Naive thymus-derived CD4-positive, alpha-beta T cell (primary cell): ENCODE measurements at regions of chr2 and their contacts with region 1.

Region 1: GRCh38 chr2:196639180-196640030 is at the start of gene CCDC150:
- DNase-seq: peak; percentile 88 to 95 (median 94)
- ATAC-seq: peak; percentile 100
- H3K4me3 ChIP-seq: peak within 1 kb of the TSS; percentile 86
- H3K4me3 Mint-ChIP-seq: peak within 1 kb of the TSS; percentile 82 to 92 (median 88)
- H3K27ac ChIP-seq: peak within 1 kb of the TSS; percentile 48
- H3K27ac Mint-ChIP-seq: peak within 1 kb of the TSS in 8 of 9 donors; percentile 30 to 78 (median 43)
- H3K4me1 ChIP-seq: peaks cover 7 to 8% of the 10 kb centered on the region in 2 donors
- H3K4me1 Mint-ChIP-seq: peaks cover 4 to 26% (median 19%) of the 10 kb centered on the region in 7 donors
- H3K27me3 ChIP-seq: no peaks in the 10 kb centered on the region
- H3K27me3 Mint-ChIP-seq: peaks cover 0 to 15% (median 0%) of the 10 kb centered on the region in 5 donors
- total RNA-seq, gene CCDC150: 0.13 to 11.2 (median 1.2) TPM

Region 2: GRCh38 chr2:196431957-196432356 is 207.4 kb before region 1 on chr2:
- CTCF ChIA-PET with region 1: no interaction called
- POLR2A ChIA-PET with region 1: no interaction called
- intact Hi-C with region 1: no loop called
- DNase-seq: no peak
- ATAC-seq: no peak
- H3K4me3 ChIP-seq: no peak overlapping the region
- H3K4me3 Mint-ChIP-seq: no peak overlapping the region
- H3K27ac ChIP-seq: no peak overlapping the region
- H3K27ac Mint-ChIP-seq: no peak overlapping the region
- H3K4me1 ChIP-seq: no peaks in the 10 kb centered on the region
- H3K4me1 Mint-ChIP-seq: peaks cover 0 to 12% (median 5%) of the 10 kb centered on the region in 7 donors
- H3K27me3 ChIP-seq: no peaks in the 10 kb centered on the region
- H3K27me3 Mint-ChIP-seq: peaks cover 5 to 31% (median 15%) of the 10 kb centered on the region in 5 donors

Region 3: DNA sequence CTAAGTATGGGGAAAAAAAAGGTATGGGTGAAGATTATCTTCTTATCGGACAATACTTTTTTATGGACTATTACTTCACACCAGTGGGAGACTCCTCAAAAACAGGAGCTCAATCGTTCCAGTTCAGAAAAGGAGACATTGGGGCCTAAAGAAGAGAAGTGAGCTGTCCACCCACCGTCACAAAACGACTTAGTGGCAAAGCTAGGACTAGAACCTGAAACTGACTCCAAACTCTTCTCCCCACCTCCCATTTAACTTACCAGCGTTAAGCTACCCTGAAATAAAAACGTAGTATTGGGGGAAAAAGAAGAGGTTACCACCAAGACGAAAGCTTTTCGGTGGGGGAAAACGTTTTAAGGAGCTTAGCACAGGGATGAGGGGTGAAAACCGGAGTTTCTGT is 159.6 kb after region 1 on chr2:
- CTCF ChIA-PET with region 1: interaction called, 3 read pairs
- POLR2A ChIA-PET with region 1: interaction called, 4 read pairs
- intact Hi-C with region 1: loop called (anchors 1 kb)
- DNase-seq: peak in 1 of 9 donors; percentile 1
- ATAC-seq: peak; percentile 1
- H3K4me3 ChIP-seq: peak overlapping the region; percentile 98
- H3K4me3 Mint-ChIP-seq: peak overlapping the region; percentile 85 to 99 (median 96)
- H3K27ac ChIP-seq: peak overlapping the region; percentile 73
- H3K27ac Mint-ChIP-seq: peak overlapping the region; percentile 89 to 99 (median 91)
- H3K4me1 ChIP-seq: peaks cover 4 to 6% of the 10 kb centered on the region in 2 donors
- H3K4me1 Mint-ChIP-seq: peaks cover 17 to 52% (median 38%) of the 10 kb centered on the region in 7 donors
- H3K27me3 ChIP-seq: no peaks in the 10 kb centered on the region
- H3K27me3 Mint-ChIP-seq: peaks cover 0 to 4% (median 4%) of the 10 kb centered on the region in 5 donors